Activated B cell treated with CpG ODN at 0.5 μM for 24 hours (primary cell): ENCODE measurements at regions of chr14 and their contacts with region 1.

Region 1: GRCh38 chr14:75293920-75294642 is 15.5 kb downstream of the FOS start:
- DNase-seq: peak; percentile 96
- ATAC-seq: peak; percentile 85
- H3K4me3 Mint-ChIP-seq: peak overlapping the region; percentile 95
- H3K27ac Mint-ChIP-seq: peak overlapping the region; percentile 88
- H3K4me1 Mint-ChIP-seq: peaks cover 21% of the 10 kb centered on the region
- H3K27me3 Mint-ChIP-seq: peaks cover 6% of the 10 kb centered on the region
- CTCF ChIP-seq: no peak

Region 2: GRCh38 chr14:74922739-74923401 is 371.2 kb before region 1 on chr14 and contains the start of gene RPS6KL1:
- CTCF ChIA-PET with region 1: no interaction called
- POLR2A ChIA-PET with region 1: no interaction called
- intact Hi-C with region 1: no loop called
- DNase-seq: peak; percentile 59
- ATAC-seq: peak; percentile 98
- H3K4me3 Mint-ChIP-seq: peak within 1 kb of the TSS; percentile 69
- H3K27ac Mint-ChIP-seq: no peak within 1 kb of the TSS
- H3K4me1 Mint-ChIP-seq: peaks cover 8% of the 10 kb centered on the region
- H3K27me3 Mint-ChIP-seq: peaks cover 2% of the 10 kb centered on the region
- CTCF ChIP-seq: no peak
- total RNA-seq, gene RPS6KL1: 5.2 and 7.0 TPM in 2 replicates

Region 3: GRCh38 chr14:75063407-75064213 is 230.5 kb before region 1 on chr14 and contains the start of gene ACYP1:
- CTCF ChIA-PET with region 1: no interaction called
- POLR2A ChIA-PET with region 1: no interaction called
- intact Hi-C with region 1: no loop called
- DNase-seq: peak; percentile 90
- ATAC-seq: peak; percentile 99
- H3K4me3 Mint-ChIP-seq: peak within 1 kb of the TSS; percentile 100
- H3K27ac Mint-ChIP-seq: peak within 1 kb of the TSS; percentile 94
- H3K4me1 Mint-ChIP-seq: peaks cover 19% of the 10 kb centered on the region
- H3K27me3 Mint-ChIP-seq: no peaks in the 10 kb centered on the region
- CTCF ChIP-seq: no peak
- total RNA-seq, gene ACYP1: 21.6 and 25.9 TPM in 2 replicates

Region 4: GRCh38 chr14:75126679-75127473 is 167.2 kb before region 1 on chr14 and contains the start of gene NEK9:
- CTCF ChIA-PET with region 1: interaction called, 16 read pairs
- POLR2A ChIA-PET with region 1: interaction called, 8 read pairs
- intact Hi-C with region 1: loop called (anchors 1 kb)
- DNase-seq: peak; percentile 86
- ATAC-seq: peak; percentile 88
- H3K4me3 Mint-ChIP-seq: peak within 1 kb of the TSS; percentile 96
- H3K27ac Mint-ChIP-seq: peak within 1 kb of the TSS; percentile 94
- H3K4me1 Mint-ChIP-seq: peaks cover 38% of the 10 kb centered on the region
- H3K27me3 Mint-ChIP-seq: no peaks in the 10 kb centered on the region
- CTCF ChIP-seq: no peak
- total RNA-seq, gene NEK9: 96.1 and 97.7 TPM in 2 replicates

Region 5: GRCh38 chr14:75138492-75138891 is 155.6 kb before region 1 on chr14:
- CTCF ChIA-PET with region 1: interaction called, 19 read pairs
- POLR2A ChIA-PET with region 1: interaction called, 5 read pairs
- intact Hi-C with region 1: loop called (anchors 1 kb)
- DNase-seq: no peak
- ATAC-seq: peak; percentile 72
- H3K4me3 Mint-ChIP-seq: peak overlapping the region; percentile 55
- H3K27ac Mint-ChIP-seq: peak overlapping the region; percentile 76
- H3K4me1 Mint-ChIP-seq: peaks cover 51% of the 10 kb centered on the region
- H3K27me3 Mint-ChIP-seq: no peaks in the 10 kb centered on the region
- CTCF ChIP-seq: no peak

Region 6: GRCh38 chr14:75188520-75189268 is 105.4 kb before region 1 on chr14:
- CTCF ChIA-PET with region 1: interaction called, 9 read pairs
- POLR2A ChIA-PET with region 1: interaction called, 3 read pairs
- intact Hi-C with region 1: loop called (anchors 1 kb)
- DNase-seq: no peak
- ATAC-seq: peak; percentile 88
- H3K4me3 Mint-ChIP-seq: peak overlapping the region; percentile 47
- H3K27ac Mint-ChIP-seq: peak overlapping the region; percentile 68
- H3K4me1 Mint-ChIP-seq: peaks cover 25% of the 10 kb centered on the region
- H3K27me3 Mint-ChIP-seq: no peaks in the 10 kb centered on the region
- CTCF ChIP-seq: no peak

Region 7: DNA sequence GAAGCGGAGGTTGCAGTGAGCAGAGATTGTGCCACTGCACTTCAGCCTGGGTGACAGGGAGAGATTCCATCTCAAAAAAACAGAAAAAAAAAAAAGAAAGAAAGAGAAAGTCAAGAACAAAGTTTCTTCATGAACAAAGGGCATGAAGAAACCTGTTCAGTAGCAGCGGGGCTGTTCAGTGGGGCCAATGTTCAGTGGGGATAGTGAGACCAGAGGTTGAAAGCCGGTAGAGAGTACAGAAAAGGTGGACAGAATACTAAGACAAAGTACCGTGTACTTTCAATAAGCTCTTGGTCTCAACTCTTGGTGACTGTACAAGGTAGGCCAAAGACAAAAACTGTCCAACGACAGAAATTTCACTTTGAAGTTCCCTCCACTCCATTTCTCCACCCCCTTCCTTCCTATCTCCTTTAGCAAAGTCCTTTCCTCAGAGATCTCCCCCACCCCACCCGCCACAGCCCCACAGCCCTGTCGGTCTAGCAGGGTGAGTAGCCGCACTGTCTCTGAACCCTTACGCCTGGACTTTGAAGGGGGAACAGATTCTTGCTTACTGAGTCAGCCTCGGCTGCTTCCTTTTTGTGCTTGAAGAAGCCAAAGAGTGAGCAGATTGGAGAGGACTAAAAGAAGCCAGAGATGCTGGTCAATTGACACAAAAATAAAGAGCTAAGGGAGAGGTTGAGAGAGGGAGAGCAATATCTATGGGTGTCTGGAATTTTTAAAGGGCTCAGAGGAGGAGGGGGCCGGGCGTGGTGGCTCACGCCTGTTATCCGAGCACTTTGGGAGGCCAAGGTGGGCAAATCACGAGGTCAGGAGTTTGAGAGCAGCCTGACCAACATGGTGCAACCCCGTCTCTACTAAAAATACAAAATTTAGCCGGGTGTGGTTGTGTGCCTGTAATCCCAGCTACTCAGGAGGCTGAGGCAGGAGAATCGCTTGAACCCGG is 59.6 kb before region 1 on chr14:
- CTCF ChIA-PET with region 1: no interaction called
- POLR2A ChIA-PET with region 1: no interaction called
- intact Hi-C with region 1: no loop called
- DNase-seq: no peak
- ATAC-seq: no peak
- H3K4me3 Mint-ChIP-seq: no peak overlapping the region
- H3K27ac Mint-ChIP-seq: no peak overlapping the region
- H3K4me1 Mint-ChIP-seq: peaks cover 20% of the 10 kb centered on the region
- H3K27me3 Mint-ChIP-seq: no peaks in the 10 kb centered on the region
- CTCF ChIP-seq: no peak

Region 8: DNA sequence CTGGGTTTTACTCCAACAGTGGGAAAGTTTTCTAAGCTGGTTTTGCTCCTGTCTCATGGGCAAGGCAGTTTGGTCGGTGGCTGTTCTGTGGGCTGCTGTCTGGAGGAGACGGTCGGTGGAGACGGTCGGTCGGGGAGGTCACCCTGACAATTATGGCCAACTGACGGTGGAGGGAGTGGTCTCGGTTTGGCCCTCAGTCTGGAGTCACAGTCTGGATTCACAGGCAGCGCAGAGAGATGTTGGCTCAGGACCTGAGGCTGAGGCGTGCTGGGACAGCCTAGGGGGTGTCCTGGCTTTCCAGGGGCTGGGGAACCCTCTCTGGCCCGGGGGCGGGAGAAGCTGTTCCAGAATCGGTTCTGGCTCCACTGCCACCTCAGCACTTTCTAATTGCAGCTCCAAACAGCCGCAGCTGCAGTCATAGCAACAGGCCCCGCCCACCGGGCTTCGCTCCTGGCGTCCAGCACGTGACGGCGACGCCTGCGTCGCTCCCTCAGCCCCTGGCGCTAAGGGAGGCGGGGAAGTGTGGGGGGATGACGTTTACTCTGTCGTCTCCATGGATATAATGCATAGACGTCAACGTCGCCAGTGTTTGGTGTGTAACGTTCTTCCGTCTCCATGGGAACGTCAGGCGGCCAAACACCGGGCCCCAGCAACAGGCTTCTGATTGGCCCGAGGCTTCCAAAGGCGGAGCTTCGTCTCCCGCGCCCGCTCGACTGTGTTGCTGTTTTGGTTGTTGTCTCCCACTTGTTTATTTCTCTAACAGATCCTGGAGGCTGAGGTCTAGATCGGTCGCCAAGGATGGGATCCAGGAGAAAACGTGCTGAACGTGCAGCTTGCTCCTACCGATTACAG is 35.2 kb before region 1 on chr14:
- CTCF ChIA-PET with region 1: interaction called, 5 read pairs
- POLR2A ChIA-PET with region 1: interaction called, 11 read pairs
- intact Hi-C with region 1: loop called (anchors 1 kb)
- DNase-seq: peak; percentile 99
- ATAC-seq: peak; percentile 86
- H3K4me3 Mint-ChIP-seq: peak overlapping the region; percentile 95
- H3K27ac Mint-ChIP-seq: peak overlapping the region; percentile 100
- H3K4me1 Mint-ChIP-seq: peaks cover 24% of the 10 kb centered on the region
- H3K27me3 Mint-ChIP-seq: peaks cover 4% of the 10 kb centered on the region
- CTCF ChIP-seq: no peak